ENCODE measurements at regions of chr4 and their contacts with region 1.

Region 1: DNA sequence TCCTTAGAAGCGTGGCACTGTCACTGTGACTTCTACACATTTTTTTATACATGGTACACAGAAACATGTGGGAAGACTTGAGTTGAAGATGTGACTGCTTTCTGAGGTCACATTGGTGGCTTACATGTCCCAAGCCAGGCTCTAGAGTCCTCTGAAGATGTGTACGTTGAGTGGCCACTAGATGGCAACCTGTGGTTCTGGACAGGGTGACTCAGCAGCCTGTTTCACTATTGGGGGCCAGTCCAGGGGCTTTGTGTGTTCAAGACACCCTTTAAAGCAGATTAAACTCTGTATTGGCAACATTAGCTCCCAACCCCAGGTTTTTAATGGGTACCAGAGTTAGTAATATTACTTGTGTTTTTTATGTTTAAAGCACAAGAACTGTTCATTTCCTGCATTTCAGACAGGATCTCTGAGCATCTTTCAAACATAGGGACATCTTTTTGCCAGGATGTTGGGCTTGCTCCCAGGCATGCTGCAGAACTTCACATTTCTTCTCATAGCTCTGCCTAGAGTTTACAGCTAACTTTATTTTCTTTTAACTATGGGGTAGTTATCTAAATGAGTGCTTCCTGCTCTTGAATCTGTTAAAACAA is 53.0 kb downstream of the DCUN1D4 start:
- DNase-seq: peak; percentile 3
- H3K4me3 ChIP-seq: no peak overlapping the region
- CTCF ChIP-seq: peak; percentile 82

Region 2: GRCh38 chr4:51853027-51853682 is 42.8 kb before region 1 on chr4:
- CTCF ChIA-PET with region 1: interaction called, 10 read pairs
- POLR2A ChIA-PET with region 1: no interaction called
- DNase-seq: no peak
- H3K4me3 ChIP-seq: no peak overlapping the region
- CTCF ChIP-seq: no peak

Region 3: GRCh38 chr4:51880016-51880915 is 15.6 kb before region 1 on chr4:
- CTCF ChIA-PET with region 1: interaction called, 47 read pairs
- POLR2A ChIA-PET with region 1: no interaction called
- DNase-seq: no peak
- H3K4me3 ChIP-seq: no peak overlapping the region
- CTCF ChIP-seq: no peak

Region 4: GRCh38 chr4:51906167-51906958 is 10.5 kb after region 1 on chr4:
- CTCF ChIA-PET with region 1: interaction called, 60 read pairs
- POLR2A ChIA-PET with region 1: interaction called, 3 read pairs
- DNase-seq: no peak
- H3K4me3 ChIP-seq: no peak overlapping the region
- CTCF ChIP-seq: no peak

Region 5: GRCh38 chr4:51960486-51960885 is 64.6 kb after region 1 on chr4:
- CTCF ChIA-PET with region 1: no interaction called
- POLR2A ChIA-PET with region 1: no interaction called
- DNase-seq: no peak
- H3K4me3 ChIP-seq: no peak overlapping the region
- CTCF ChIP-seq: no peak

Region 6: DNA sequence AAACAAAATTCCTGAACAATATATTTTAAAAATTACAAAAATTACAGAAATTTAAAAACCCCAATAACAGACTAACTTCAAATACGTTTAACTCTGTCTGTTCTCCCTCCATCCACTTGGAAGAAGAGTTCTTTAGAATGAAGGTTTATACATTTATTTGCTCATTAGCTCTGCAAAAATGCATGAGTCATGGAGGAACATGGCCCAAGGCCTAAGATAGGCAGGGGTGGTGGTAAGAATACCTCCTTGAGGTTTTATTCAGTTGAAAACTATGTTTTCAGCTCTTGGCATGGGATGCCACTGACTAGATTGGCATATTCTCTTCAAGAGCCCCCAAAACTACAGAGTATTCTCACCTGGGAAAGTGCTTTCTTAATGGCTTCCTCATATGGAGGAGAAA is 133.1 kb after region 1 on chr4:
- CTCF ChIA-PET with region 1: interaction called, 32 read pairs
- POLR2A ChIA-PET with region 1: no interaction called
- DNase-seq: peak; percentile 41
- H3K4me3 ChIP-seq: no peak overlapping the region
- CTCF ChIP-seq: no peak